Right ventricle myocardium inferior (tissue), 1 donor: ENCODE measurements at regions of chr9 and their contacts with region 1.

Region 1: GRCh38 chr9:95317119-95317892 is at the start of gene FANCC:
- DNase-seq: peak; percentile 96
- ATAC-seq: peak; percentile 96
- total RNA-seq, gene FANCC: 6.1 TPM

Region 2: DNA sequence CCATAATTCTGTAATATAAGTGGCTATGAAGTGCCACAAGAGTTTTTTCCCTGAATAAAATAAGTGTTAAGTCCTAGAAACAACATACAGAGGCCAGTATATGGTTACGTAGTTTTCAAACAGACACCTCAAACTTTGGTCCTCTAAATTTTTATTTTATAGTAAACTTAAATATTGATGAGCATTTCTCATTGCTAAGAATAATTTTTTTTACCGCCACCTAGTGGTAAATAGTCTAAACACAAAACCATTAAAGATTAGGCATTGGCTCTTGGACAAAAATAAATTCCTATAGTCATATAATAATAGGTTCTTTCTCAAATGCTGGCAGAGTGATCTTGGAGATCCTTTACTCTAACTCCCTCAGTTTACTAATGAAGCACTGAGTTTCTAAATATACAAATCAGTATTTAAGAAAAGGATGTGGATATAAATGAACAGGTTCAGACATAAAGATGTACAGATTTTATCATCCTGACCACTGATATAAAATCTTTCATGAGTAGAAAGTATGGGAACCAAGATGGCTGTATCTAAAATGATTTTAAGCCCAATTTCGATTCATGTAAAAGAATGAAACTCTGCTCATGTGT is 136.0 kb before region 1 on chr9:
- intact Hi-C with region 1: loop called (anchors 2 kb)
- DNase-seq: no peak
- ATAC-seq: no peak

Region 3: GRCh38 chr9:95383185-95383673 is 65.9 kb after region 1 on chr9:
- intact Hi-C with region 1: no loop called
- DNase-seq: no peak
- ATAC-seq: no peak